GM18951 (cell line): ENCODE measurements at regions of chr21 and their contacts with region 1.

Region 1: DNA sequence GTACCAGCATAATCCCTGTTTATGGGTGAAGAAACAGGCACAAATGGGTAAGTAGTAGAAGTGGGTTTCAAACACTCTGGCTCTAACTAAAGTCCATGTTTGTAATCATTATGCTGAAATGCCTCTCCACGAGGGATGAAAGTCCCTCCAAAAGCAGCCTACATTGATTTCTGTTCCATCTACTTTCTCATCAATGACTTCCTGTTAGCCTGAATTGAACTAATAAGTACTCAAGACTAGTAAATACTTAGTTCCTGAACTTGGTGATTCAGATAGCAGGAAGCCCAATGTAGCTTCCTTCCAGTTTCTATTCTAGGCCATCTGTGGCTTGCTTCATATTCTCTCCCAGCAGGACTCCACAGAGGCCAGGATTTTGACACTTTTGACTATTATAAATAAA is 11.3 kb upstream of the BACH1 start:
- POLR2A ChIP-seq: no peak

Region 2: DNA sequence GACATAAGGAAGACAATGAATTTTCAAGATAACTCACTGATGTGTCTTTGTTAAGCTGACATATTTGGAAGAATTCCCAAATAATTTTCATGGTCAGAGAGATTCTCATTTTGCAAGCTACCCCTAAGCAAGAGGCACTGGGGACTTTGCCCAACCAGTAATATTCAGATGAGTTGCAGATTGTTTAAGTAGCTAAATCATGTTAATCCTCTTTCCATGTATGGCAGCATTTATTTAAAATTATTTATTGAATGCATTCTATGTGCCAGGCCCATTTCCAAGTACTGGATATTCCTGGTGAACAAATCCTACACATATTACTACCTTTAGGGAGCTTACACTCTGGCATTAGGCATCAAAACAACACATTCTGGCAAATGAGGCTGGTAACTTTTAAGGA is 45.2 kb before region 1 on chr21:
- in situ Hi-C with region 1: loop called (anchors 5 kb)
- POLR2A ChIP-seq: no peak